ENCODE measurements at regions of chr11 and their contacts with region 1.

Region 1: DNA sequence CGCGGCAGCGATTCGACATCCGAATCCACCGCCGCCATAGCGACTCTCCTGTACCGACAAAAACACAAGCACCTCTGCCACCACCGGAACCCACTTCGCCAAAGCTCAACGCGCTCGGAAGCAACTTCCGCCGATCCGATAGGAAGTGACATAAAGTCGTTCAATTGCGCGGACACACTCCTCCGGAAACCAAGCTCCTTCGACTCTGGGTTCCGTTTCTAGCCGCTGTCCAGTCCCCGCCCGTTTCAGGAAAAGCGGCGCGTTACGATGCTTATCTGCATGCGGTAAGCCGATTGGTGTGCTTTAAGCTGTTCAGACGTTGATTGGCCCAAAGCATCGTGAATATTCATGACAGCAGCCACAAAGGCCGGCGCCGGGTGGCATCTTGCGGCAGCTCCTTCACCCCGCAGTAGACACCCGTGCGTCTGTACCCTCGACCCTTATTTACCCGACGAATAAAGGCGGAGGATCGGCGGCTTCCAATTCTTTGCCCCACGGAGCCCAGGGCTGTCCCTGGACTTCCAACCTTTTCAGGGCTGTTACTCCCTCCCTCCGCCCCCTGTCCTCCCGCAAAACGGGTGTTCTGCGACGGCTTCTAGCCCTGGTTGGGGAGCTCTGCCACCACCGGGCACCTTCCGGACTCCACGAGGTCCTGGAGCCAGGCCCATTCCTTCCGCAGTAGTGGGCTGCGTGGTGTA is at the start of gene TUT1:
- DNase-seq: peak; percentile 93 to 97
- H3K4me3 ChIP-seq: peak within 1 kb of the TSS; percentile 89 to 97 (median 94)
- H3K27ac ChIP-seq: peak within 1 kb of the TSS; percentile 72
- H3K4me1 ChIP-seq: peaks cover 0 to 3% (median under 1%) of the 10 kb centered on the region in 4 experiments; a peak in 5 of 7 replicates
- H3K27me3 ChIP-seq: no peaks in the 10 kb centered on the region
- CTCF ChIP-seq: no peak
- EP300 ChIP-seq: peak in 1 of 2 experiments; percentile 71; a peak in 1 of 3 replicates
- POLR2A ChIP-seq: peak; percentile 91 to 93
- RAD21 ChIP-seq: no peak; a peak in 1 of 4 replicates
- total RNA-seq, gene TUT1: 24.6 and 31.5 TPM in 2 replicates

Region 2: GRCh38 chr11:62266558-62266957 is 325.0 kb before region 1 on chr11:
- CTCF ChIA-PET with region 1: no interaction called
- POLR2A ChIA-PET with region 1: no interaction called
- DNase-seq: no peak
- H3K4me3 ChIP-seq: no peak overlapping the region
- H3K27ac ChIP-seq: no peak overlapping the region
- H3K4me1 ChIP-seq: no peaks in the 10 kb centered on the region
- H3K27me3 ChIP-seq: no peaks in the 10 kb centered on the region
- CTCF ChIP-seq: no peak
- EP300 ChIP-seq: no peak
- POLR2A ChIP-seq: no peak
- RAD21 ChIP-seq: no peak

Region 3: DNA sequence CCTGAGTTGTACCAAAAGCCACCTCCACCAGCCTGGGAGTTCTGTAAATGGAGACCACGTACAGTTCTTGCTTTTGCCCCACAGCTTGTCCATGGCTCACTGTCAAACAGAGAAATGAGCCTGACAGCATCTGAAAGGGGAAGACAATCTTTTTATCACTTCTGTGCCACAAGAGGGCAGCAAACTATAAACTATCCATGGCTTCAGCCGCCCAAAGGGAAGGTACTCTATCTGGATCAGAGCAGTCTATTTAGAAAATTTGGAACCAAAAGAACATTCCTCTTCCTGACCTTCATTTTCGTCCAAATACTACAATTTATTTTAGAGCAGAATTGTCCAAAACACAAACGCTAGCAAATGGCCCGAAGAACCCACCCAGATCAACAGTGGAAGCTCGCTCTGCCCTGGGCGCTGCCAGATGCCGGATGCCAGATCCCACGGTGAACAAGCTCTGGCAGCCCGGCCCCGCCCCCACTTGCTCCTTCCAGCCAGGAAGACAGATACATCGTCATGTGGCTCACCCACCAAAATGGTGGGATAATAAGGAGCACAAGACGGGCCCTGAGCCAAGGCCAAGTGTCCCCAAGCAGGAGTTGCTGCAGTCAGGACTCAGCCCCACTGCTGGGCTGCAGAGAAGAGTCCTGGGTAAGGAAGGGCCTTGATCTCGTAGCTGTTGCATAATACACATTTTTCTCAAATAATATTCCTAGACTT is 196.6 kb before region 1 on chr11:
- CTCF ChIA-PET with region 1: interaction called, 12 read pairs
- POLR2A ChIA-PET with region 1: interaction called, 4 read pairs
- DNase-seq: peak in 1 of 2 experiments; percentile 82
- H3K4me3 ChIP-seq: peak overlapping the region; percentile 9 to 54 (median 22); a peak in 5 of 8 replicates
- H3K27ac ChIP-seq: no peak overlapping the region
- H3K4me1 ChIP-seq: peaks cover 3 to 13% (median 4%) of the 10 kb centered on the region in 4 experiments; a peak in 5 of 7 replicates
- H3K27me3 ChIP-seq: no peaks in the 10 kb centered on the region
- CTCF ChIP-seq: peak in 2 of 3 experiments; percentile 64 to 71; a peak in 3 of 4 replicates
- EP300 ChIP-seq: no peak
- POLR2A ChIP-seq: no peak
- RAD21 ChIP-seq: peak; percentile 86 to 88

Region 4: GRCh38 chr11:62573592-62574362 is 17.8 kb before region 1 on chr11 and contains the start of gene EEF1G:
- CTCF ChIA-PET with region 1: interaction called, 15 read pairs
- POLR2A ChIA-PET with region 1: interaction called, 167 read pairs
- DNase-seq: peak; percentile 96 to 99
- H3K4me3 ChIP-seq: peak within 1 kb of the TSS; percentile 90 to 100 (median 91)
- H3K27ac ChIP-seq: peak within 1 kb of the TSS; percentile 75
- H3K4me1 ChIP-seq: peaks cover 0 to 11% (median 7%) of the 10 kb centered on the region in 4 experiments; a peak in 4 of 7 replicates
- H3K27me3 ChIP-seq: no peaks in the 10 kb centered on the region
- CTCF ChIP-seq: no peak
- EP300 ChIP-seq: peak in 1 of 2 experiments; percentile 48; a peak in 1 of 3 replicates
- POLR2A ChIP-seq: peak; percentile 64 to 86
- RAD21 ChIP-seq: no peak
- total RNA-seq, gene EEF1G: 1,622 and 1,627 TPM in 2 replicates

Region 5: GRCh38 chr11:62621567-62622470 is 30.2 kb after region 1 on chr11 and contains the start of gene B3GAT3:
- CTCF ChIA-PET with region 1: interaction called, 7 read pairs
- POLR2A ChIA-PET with region 1: interaction called, 235 read pairs
- DNase-seq: peak; percentile 97 to 98
- H3K4me3 ChIP-seq: peak within 1 kb of the TSS; percentile 59 to 87 (median 83)
- H3K27ac ChIP-seq: peak within 1 kb of the TSS; percentile 46
- H3K4me1 ChIP-seq: peaks cover 0 to 5% (median 0%) of the 10 kb centered on the region in 4 experiments; a peak in 1 of 7 replicates
- H3K27me3 ChIP-seq: no peaks in the 10 kb centered on the region
- CTCF ChIP-seq: peak in 1 of 3 experiments; percentile 7; a peak in 1 of 4 replicates
- EP300 ChIP-seq: no peak
- POLR2A ChIP-seq: peak in 1 of 2 experiments; percentile 96; a peak in 2 of 3 replicates
- RAD21 ChIP-seq: peak; percentile 0; a peak in 2 of 4 replicates
- total RNA-seq, gene B3GAT3: 28.0 and 34.5 TPM in 2 replicates

Region 6: DNA sequence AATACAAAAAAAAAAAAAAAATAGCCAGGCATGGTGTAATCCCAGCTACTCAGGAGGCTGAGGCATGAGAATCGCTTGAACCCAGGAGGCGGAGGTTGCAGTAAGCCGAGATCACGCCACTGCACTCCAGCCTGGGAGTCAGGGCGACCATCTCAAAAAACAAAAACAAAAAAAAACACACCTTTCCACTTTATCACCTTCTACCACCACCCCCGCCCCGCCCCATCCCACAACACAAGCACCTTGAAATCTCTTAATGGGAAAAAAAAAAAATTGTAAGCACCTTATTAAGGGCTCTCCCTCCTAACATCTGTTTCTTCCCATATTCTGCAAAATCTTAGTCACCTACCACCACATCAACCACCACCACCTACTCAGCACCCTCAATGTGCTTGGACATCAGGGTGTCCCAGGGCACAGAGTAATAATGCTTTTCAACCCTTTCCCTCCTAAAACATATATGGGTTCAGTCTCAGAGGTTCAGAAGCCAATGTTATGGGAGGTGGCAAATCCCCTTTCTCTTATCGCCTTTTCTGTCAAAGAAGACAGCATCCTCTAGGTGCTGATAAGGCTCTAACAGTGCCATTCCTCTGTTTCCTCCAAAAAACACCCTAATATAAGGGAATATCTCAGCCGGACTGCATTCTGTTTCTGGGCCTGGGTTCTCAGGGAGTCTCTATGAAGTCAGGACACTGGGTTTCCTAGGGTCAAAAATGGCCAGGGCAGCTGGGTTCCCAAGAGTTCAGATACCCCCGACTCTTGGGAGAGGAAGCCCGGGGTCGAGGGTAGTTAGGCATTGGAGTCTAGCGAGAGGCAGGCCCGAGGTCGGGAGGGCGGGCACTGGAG is 60.8 kb after region 1 on chr11:
- CTCF ChIA-PET with region 1: interaction called, 4 read pairs
- POLR2A ChIA-PET with region 1: interaction called, 52 read pairs
- DNase-seq: no peak
- H3K4me3 ChIP-seq: peak overlapping the region; percentile 87 to 96 (median 92)
- H3K27ac ChIP-seq: peak overlapping the region; percentile 70
- H3K4me1 ChIP-seq: no peaks in the 10 kb centered on the region
- H3K27me3 ChIP-seq: no peaks in the 10 kb centered on the region
- CTCF ChIP-seq: 0 out of 4 replicates have a peak, but pooled peaks of 1 of the 3 experiments have one; percentile 1
- EP300 ChIP-seq: no peak
- POLR2A ChIP-seq: no peak
- RAD21 ChIP-seq: no peak

Region 7: DNA sequence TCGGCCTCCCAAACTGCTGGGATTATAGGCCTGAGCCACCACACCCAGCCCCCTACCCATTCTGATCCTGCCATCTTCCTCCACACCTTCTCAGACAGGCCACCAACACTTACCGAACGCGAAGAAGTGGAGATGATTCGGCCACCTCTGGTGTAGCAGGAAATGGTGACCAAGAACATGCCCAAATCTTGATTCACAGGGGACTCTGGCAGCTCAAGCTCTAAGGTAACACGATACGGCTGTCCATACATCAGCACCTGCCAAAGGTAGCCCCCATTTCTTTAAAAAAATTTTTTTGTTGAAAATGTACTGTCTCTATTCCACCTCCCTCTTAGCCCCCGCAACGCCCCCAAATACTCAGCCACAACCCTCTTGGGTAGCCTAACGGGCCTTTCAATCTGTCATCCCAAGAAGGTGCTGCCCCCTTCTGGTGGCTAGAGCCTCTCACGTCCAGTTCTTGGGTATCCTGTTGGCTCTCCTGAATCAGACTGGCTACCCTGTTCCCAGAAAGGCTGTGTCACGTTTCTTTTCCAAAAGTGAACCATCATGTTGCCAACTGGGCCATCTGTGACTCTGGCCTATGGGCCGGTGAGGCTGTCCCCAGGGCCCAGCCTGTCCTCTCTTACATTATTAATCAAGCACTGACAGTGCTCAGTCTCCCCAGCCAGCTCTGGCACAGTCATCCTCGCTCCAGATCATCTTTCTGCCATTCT is 103.0 kb after region 1 on chr11:
- CTCF ChIA-PET with region 1: interaction called, 16 read pairs
- POLR2A ChIA-PET with region 1: interaction called, 6 read pairs
- DNase-seq: peak in 1 of 2 experiments; percentile 87
- H3K4me3 ChIP-seq: no peak overlapping the region
- H3K27ac ChIP-seq: no peak overlapping the region
- H3K4me1 ChIP-seq: no peaks in the 10 kb centered on the region; a peak in 1 of 7 replicates
- H3K27me3 ChIP-seq: no peaks in the 10 kb centered on the region
- CTCF ChIP-seq: peak; percentile 76 to 89 (median 81)
- EP300 ChIP-seq: no peak
- POLR2A ChIP-seq: no peak
- RAD21 ChIP-seq: peak; percentile 72 to 84

Measured in H1 (cell line).